Kidney (tissue), 22 donors: ENCODE measurements at regions of chr12 and their contacts with region 1.

Region 1: GRCh38 chr12:89059721-89060541 is 292.4 kb downstream of the DUSP6 start:
- DNase-seq: peak in 2 of 5 donors; percentile 18 to 51
- H3K4me3 ChIP-seq: no peak overlapping the region
- H3K27ac ChIP-seq: no peak overlapping the region
- H3K4me1 ChIP-seq: peaks cover 0 to 22% (median 6%) of the 10 kb centered on the region in 3 donors
- H3K27me3 ChIP-seq: no peaks in the 10 kb centered on the region
- CTCF ChIP-seq: no peak

Region 2: DNA sequence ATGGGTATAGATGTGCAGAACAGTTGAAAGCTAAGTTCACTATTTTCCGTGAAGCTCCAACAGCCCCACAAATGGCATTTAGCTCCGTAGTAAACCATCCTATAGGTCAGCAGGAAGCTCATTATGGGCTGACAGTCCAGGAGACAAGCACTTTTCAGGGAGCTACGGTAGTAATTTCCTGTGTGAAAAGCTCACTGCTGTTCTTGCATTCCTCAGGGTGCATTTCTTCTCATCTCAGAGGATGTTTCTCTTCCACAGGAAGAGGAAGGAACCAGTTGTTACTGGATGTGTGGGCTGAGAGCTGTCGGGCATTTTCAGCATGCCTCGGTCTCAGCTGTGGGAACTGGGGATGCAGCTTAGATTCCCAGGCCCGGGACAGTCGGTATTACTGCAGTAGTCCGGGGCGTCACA is 391.9 kb after region 1 on chr12:
- intact Hi-C with region 1: loop called (anchors 5 kb)
- DNase-seq: peak; percentile 41 to 74 (median 47)
- H3K4me3 ChIP-seq: peak overlapping the region in 2 of 3 donors; percentile 22 to 40
- H3K27ac ChIP-seq: peak overlapping the region; percentile 9 to 40
- H3K4me1 ChIP-seq: peaks cover 6 to 25% (median 16%) of the 10 kb centered on the region in 3 donors
- H3K27me3 ChIP-seq: no peaks in the 10 kb centered on the region
- CTCF ChIP-seq: no peak